ENCODE measurements at regions of chr21 and their contacts with region 1.

Region 1: DNA sequence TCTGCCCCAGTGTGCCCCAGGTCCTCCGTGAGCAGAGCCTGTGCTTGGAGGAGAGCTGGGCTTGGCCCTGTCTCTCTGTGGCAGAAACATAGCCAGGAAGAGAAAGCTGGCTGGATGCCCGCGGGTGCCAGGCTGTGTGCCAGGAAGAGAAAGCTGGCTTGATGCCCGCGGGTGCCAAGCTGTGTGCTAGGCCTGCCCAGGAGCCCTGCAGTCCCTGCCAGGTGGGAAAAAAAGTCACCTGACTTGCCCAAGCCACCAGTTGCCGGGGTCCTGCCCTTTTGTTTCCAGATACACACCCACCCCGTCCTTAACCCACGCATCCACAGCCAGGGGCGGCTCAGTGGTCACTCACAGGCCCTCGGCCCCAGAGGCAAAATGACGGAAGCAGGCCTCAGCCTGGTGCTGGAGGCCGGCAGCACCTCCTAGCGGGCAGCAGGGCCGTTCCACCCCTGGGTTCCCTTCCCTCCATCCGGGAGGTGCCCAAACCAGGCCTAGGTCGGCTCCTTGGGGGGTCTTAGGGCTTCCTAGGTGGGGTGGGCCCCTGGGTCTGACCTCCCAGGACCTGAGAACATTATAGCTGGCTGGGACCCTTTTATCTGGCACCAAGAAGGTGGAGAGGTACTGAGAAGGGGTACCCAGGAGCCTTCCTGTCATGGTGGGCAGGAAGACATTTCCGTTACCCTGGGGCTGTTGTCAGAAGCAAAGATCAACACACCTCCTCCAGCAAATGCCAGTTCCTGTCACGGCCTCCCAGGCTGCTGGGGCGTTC is 9.1 kb downstream of the ITGB2 start:
- DNase-seq: peak; percentile 92

Region 2: DNA sequence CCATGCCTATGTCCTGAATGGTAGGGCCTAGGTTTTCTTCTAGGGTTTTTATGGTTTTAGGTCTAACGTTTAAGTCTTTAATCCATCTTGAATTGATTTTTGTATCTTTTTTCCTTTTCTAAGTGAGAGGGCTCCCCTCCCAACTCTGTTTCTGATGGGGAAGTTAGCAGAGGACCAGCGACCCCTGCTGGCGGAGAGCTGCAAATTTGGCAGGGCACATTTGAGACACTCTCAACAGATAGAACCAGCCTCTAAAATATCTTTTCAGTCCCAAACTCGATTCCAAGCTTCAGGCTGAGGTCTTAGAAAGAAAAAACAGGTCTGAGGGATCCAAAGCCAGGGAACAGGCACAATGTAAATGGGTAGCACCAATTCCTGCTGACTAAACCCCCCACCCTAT is 423.7 kb before region 1 on chr21:
- intact Hi-C with region 1: no loop called
- DNase-seq: no peak

Region 3: GRCh38 chr21:44618504-44618903 is 293.1 kb before region 1 on chr21:
- intact Hi-C with region 1: loop called in 1 of 2 experiments (anchors 10 kb)
- DNase-seq: no peak

Region 4: DNA sequence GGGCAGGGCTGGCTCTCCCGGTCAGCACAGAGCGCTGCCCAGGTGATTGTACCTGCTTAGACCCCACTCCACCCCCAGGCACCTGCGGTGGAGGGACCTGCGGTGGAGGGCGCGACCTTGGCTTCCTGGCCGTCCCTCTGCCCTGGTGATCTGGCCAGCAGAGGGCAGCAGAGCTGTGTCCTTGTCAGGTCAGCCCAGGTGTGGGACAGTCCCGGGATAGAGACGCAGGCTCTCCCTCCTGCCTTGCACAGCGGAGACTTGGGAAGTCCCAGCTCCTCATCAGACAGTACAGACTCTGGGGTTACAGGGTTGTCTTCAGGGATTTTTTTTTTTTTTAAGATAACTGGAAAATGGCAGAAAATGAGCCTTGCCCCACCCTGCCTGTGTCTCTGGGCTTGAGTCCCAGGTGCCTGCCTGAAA is 38.2 kb after region 1 on chr21:
- intact Hi-C with region 1: no loop called
- DNase-seq: peak; percentile 95

Measured in posterior vena cava (tissue), 2 donors.